ENCODE measurements at regions of chr7 and their contacts with region 1.

Region 1: DNA sequence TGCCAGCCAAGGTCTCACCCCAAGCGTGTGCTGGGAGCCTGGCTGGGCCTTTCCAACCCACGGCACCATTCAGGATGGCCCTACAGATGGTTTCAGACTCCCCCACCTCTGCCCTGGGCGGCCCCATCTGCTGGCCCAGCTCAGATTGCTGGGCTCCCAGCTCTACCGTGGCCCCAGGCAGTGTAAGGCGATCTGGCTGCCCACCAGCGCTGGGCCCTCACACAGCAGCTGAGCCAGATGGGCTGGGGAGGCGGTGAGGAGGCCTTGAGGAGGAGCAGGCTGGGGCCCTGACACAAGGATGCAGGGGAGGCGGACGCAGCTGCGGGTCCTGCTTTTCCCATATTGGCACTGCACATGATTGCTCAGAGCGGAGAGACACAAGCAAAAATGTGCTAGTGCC is 162.8 kb downstream of the NRF1 start:
- DNase-seq: no peak
- ATAC-seq: no peak

Region 2: DNA sequence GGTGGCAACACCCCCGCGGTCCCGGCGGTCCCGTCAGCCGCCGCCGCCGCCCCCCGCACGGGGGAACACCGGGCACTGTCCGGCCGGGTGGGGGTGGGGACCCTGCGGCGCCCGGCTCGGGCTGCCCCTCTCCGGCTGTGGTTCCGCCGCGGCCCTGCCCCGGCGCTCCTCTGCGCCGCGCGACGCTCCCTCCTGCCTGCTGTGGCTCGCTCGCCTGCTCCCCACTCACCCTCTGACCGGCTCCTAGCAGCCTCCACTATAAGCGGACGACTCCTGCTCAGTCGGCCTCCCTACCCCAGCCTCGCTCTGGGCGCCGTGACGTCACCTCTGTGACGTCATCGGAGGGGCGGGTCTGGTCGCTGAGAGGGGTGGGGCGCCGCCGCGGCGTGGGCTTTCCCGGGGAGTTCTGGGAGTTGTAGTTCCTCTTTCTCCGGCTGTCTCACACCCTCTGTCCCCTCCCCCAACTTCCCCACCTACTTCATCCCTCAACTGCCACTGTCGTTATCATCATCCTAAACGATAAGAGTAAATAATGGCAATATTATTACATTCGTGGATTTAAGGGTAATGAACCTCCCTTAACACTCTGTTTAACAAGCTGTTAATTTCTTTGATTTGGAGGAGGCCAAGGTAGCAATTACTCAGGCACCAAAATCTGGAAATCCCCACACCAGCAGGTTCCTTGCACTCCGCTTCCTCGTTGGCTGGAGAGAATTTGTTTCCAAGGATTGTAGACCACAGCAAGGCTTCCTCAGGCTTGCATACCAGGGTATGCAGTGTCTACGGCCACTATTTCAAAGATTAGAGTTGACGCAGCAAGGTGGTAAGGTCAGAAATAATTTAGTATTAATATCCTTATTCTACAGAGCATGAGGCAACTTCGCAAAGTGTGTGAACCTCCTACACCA is 178.5 kb after region 1 on chr7 and contains the start of gene UBE2H:
- intact Hi-C with region 1: no loop called
- DNase-seq: peak; percentile 96
- ATAC-seq: peak; percentile 90
- total RNA-seq, gene UBE2H: 92.1 TPM

Region 3: DNA sequence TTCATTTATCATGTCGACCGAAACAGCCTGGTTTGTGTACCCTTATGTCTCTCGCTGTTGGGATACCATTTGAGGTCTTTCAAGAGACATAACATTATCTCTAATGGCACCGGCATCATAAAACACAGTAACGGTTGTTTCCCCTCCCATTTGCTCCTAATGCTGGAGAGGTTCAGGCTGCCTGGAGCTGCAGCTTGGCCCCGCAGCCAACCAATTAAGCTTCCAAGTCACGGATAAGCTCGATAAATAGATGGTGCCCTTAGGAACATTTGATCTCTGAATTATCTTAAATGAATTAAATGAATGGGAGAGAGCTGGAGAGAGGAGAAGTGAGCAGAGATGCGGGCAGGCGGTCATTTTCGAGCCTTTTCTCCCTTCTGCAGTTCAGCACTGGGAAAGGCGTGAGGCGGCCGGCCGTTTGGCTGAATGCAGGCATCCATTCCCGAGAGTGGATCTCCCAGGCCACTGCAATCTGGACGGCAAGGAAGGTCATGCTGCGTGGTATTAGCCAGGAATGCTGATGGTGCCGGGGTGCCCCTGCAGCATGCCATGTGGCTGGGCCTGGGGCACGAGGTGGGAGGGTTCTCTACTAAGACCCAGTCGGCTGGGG is 531.2 kb after region 1 on chr7:
- intact Hi-C with region 1: loop called (anchors 5 kb)
- DNase-seq: no peak
- ATAC-seq: no peak

Measured in sciatic nerve (tissue), 2 donors.